Left ventricle myocardium inferior (tissue), 1 donor: ENCODE measurements at regions of chr15 and their contacts with region 1.

Region 1: DNA sequence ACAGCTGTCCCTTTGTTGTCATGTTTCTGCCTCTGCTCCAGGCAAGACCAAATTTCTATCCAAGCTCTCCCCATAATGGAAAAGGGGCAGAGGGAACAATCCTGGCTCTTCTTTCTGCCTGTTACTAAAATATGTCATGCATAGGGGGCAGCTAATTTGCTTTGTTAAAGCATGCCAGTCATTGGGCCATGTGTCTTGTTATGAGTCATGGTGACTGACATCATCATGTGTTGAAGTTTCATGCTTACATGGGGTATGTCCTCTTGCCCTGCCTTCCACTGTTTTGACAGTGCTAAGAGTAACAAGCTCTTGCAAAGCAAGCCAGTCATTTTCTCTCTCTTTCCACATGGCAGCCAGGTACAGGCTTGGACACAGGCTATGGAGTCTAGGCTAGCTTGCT is 268.9 kb downstream of the GABRB3 start:
- DNase-seq: no peak
- H3K4me3 ChIP-seq: no peak overlapping the region
- H3K27ac ChIP-seq: no peak overlapping the region
- H3K4me1 ChIP-seq: peaks cover 6% of the 10 kb centered on the region
- H3K27me3 ChIP-seq: no peaks in the 10 kb centered on the region
- CTCF ChIP-seq: no peak

Region 2: DNA sequence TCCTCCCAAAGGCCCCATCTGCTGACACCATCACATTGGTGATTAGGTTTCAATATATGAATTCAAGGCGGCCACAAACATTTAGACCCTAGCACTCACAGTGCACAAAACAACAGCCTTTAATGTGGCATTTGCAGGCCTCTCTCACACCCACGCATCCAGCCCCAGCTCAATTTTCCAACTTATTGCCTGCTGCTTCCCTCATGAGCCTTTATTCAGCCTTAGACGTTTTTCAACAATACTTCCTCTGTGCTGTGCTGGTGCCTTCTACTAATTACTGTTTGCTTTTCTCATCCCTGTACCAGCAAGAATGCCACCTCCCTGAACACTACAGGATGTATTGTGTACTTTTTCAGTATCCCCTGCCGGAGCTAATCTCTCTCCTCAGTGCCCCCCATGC is 65.7 kb before region 1 on chr15:
- intact Hi-C with region 1: loop called (anchors 10 kb)
- DNase-seq: no peak
- H3K4me3 ChIP-seq: no peak overlapping the region
- H3K27ac ChIP-seq: no peak overlapping the region
- H3K4me1 ChIP-seq: peaks cover 37% of the 10 kb centered on the region
- H3K27me3 ChIP-seq: no peaks in the 10 kb centered on the region
- CTCF ChIP-seq: no peak

Region 3: GRCh38 chr15:26561896-26562295 is 57.9 kb after region 1 on chr15:
- intact Hi-C with region 1: no loop called
- DNase-seq: no peak
- H3K4me3 ChIP-seq: no peak overlapping the region
- H3K27ac ChIP-seq: peak overlapping the region; percentile 37
- H3K4me1 ChIP-seq: peaks cover 12% of the 10 kb centered on the region
- H3K27me3 ChIP-seq: no peaks in the 10 kb centered on the region
- CTCF ChIP-seq: no peak